Sigmoid colon (tissue), 7 donors: ENCODE measurements at regions of chr17 and their contacts with region 1.

Region 1: DNA sequence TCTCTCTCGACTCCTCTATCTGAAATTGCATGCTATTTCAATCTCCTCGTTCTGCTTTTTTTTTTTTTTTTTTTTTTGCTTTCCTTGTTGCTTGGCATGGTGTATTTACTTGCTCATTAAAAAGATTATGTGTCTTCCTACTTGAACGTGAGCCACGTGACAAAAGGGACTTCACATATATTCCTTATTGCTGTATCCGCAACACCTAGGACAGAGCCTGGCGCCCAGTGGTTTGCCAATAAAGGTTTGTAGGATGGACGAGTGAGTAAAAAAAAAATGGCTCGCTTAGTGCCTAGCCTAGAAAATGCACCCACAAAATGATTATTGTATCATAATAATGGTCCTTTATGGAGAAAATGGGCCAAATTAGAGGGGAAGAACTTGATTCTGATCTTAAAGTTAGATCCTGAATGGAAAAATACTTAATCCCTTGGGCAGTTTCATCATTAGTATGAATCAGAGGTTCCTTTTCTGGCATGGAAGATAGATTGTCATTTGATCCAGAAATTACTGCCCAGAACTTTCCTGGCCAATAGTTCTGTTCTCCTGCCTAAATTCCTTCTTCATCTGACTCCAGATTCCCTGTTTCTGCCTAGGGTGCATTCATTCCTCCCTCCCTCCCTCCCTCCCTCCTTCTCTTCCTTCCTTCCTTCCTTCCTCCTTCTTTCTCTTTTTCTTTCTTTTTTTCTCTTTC is 13.6 kb upstream of the TMEM220 start:
- DNase-seq: peak; percentile 49
- H3K4me3 ChIP-seq: no peak overlapping the region
- H3K27ac ChIP-seq: peak overlapping the region in 3 of 4 donors; percentile 12 to 55 (median 37)
- H3K4me1 ChIP-seq: no peaks in the 10 kb centered on the region
- H3K27me3 ChIP-seq: no peaks in the 10 kb centered on the region
- CTCF ChIP-seq: no peak
- EP300 ChIP-seq: no peak
- POLR2A ChIP-seq: no peak

Region 2: GRCh38 chr17:10631048-10631700 is 112.3 kb before region 1 on chr17:
- intact Hi-C with region 1: no loop called
- DNase-seq: no peak
- H3K4me3 ChIP-seq: no peak overlapping the region
- H3K27ac ChIP-seq: no peak overlapping the region
- H3K4me1 ChIP-seq: no peaks in the 10 kb centered on the region
- H3K27me3 ChIP-seq: no peaks in the 10 kb centered on the region
- CTCF ChIP-seq: peak in 3 of 4 experiments; percentile 43 to 84 (median 54)
- EP300 ChIP-seq: no peak
- POLR2A ChIP-seq: no peak

Region 3: DNA sequence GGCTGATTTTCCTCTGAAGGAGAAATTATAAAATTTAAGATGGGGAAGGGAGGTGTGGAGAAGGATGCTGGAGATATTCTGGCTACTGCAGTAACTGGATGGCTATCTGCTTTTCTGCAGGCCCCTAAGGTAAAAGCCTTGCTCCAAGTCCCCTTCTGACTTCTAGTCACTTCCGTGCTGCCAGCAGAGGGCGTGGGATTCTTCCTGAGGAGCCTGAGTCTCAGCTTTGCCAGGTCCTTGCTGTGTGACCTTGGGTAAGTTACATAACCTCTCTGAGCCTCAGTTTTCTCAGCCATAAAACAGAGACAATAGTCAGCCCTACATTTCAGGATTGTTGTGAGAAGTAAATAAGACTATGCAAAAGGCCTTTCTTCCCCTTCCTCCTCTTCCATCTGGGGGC is 10.6 kb after region 1 on chr17:
- intact Hi-C with region 1: no loop called
- DNase-seq: no peak
- H3K4me3 ChIP-seq: no peak overlapping the region
- H3K27ac ChIP-seq: no peak overlapping the region
- H3K4me1 ChIP-seq: no peaks in the 10 kb centered on the region
- H3K27me3 ChIP-seq: no peaks in the 10 kb centered on the region
- CTCF ChIP-seq: no peak
- EP300 ChIP-seq: no peak
- POLR2A ChIP-seq: no peak

Region 4: DNA sequence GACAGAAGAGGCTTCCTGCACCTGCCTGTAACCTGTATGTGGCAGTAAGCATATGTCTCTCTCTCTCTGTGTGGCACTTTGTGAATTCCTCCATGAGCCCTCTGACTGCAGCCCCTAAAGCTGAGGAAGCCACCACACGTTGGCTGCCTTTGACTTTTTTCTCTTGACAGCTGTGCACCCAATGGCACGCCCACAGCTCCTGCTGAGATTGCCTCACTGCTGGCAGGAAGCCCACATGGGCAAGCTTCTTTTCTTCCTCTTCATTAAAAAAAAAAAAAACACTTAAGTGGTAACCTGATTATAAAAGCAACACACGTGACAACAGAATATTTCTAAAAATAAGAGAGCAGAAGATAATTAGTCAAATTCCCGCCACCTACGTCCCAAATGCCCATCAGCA is 128.5 kb after region 1 on chr17:
- intact Hi-C with region 1: no loop called
- DNase-seq: no peak
- H3K4me3 ChIP-seq: no peak overlapping the region
- H3K27ac ChIP-seq: no peak overlapping the region
- H3K4me1 ChIP-seq: no peaks in the 10 kb centered on the region
- H3K27me3 ChIP-seq: no peaks in the 10 kb centered on the region
- CTCF ChIP-seq: no peak
- EP300 ChIP-seq: no peak
- POLR2A ChIP-seq: no peak

Region 5: DNA sequence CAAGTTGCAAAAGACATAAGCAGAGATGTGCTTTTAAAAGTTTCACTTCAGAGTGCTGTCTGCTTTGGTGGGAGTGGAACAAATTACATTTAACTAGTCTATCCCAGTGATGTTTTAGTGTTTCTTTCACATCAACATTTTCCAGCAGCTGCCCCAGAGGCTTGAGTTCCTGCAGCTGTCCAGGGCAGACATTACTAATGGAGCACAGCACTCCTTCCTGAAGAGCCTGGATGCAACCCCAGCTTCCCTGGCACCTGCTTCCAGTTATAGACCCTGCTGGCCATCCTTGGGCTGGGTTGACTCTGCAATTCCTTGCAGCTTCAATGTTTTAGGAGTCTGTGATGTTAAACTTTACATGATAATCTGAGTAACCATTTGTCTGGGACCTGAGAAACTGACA is 155.8 kb after region 1 on chr17:
- intact Hi-C with region 1: no loop called
- DNase-seq: no peak
- H3K4me3 ChIP-seq: no peak overlapping the region
- H3K27ac ChIP-seq: no peak overlapping the region
- H3K4me1 ChIP-seq: no peaks in the 10 kb centered on the region
- H3K27me3 ChIP-seq: no peaks in the 10 kb centered on the region
- CTCF ChIP-seq: no peak
- EP300 ChIP-seq: no peak
- POLR2A ChIP-seq: no peak

Region 6: DNA sequence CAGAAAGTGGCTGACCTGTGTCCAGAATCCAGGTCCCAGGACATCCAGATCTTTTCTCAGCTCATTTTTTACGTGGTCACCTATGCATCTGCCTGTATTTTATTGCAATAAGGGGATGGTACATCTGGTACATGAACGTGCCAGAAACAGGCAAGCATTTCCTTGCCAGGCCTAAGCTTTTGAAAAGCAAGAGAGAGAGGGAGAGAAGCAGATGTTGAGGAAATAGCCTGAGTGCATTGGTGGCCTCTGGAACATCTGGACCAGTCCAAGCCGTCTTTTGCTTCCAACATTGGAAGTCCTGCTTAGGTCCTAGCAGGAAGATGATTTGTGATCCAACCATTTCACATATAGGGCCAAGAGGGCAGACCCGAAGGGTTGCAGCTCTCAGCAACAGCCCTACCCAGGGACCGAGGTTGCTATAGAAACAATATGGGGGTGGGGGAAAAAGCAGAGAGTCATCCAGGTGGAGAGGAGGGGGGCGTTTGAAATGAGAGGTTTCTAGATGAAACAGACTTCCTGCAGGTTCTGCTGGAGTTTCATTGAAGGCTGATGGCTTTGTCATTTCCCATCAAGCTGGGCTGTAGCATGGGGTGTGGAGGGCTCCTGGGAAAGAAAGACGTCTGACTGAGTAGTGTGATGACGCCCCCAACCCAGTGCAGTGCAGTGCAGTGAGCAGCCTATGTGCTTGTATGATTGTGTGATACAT is 559.1 kb after region 1 on chr17:
- intact Hi-C with region 1: loop called (anchors 10 kb)
- DNase-seq: no peak
- H3K4me3 ChIP-seq: no peak overlapping the region
- H3K27ac ChIP-seq: no peak overlapping the region
- H3K4me1 ChIP-seq: peaks cover 0 to 12% (median 11%) of the 10 kb centered on the region in 4 donors
- H3K27me3 ChIP-seq: no peaks in the 10 kb centered on the region
- CTCF ChIP-seq: no peak
- EP300 ChIP-seq: no peak
- POLR2A ChIP-seq: no peak